ENCODE measurements at regions of chr4 and their contacts with region 1.

Region 1: DNA sequence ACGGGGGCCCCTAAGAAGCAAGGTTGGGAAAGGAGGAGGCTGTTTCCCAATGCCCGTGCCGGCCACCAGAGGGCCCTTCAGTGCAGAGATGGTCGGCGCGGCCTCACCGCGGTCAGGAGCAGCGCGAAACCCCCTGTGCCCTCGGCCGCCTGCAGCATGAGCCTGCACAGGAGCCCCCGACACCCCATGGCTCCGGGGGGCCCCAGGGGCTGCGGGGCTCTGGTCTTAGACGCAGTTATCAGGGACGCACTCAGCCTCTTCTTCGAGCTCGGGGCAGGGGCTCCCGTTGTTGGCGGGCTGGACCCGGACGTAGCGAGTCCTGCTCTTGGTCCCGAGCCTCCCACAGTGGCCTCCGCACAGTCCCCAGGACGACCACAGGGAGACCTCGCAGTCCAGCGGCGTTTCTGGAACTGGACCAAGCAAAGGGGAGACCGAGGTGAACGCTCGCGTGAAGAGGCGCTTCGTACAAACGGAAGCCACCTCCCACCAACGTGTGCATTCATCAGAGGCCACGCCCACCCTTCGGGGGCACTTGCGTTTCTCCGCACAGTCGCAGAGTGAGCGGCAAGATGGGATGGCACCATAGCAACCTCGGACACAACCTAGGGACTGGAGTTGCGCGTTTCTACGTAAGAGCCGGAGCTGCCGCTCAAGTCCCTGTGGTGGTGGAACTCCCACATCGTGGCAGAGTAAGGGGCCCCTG is 5.0 kb downstream of the SPON2 start:
- DNase-seq: peak; percentile 79
- ATAC-seq: peak; percentile 88
- H3K4me3 Mint-ChIP-seq: peak overlapping the region; percentile 86
- H3K27ac Mint-ChIP-seq: peak overlapping the region; percentile 80
- H3K4me1 Mint-ChIP-seq: peaks cover 57% of the 10 kb centered on the region
- H3K27me3 Mint-ChIP-seq: peaks cover 2% of the 10 kb centered on the region
- CTCF ChIP-seq: peak; percentile 69

Region 2: DNA sequence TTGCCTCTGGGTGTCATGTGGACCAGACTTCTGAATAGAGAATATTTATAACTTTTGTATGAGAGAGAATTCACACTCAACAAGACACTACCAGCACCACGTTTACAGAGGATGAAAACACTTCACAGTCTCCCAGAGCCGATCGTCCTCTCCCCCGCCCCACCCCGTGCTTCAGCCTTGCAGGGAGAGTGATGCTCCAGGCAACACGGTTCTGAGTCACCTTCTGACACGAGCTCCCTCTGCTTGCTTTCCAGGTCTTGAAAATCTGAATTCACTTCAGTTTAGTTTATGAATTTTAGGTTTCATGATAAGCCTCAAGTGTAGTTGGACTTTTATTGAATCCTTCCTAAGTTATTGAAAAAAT is 401.3 kb before region 1 on chr4:
- CTCF ChIA-PET with region 1: no interaction called
- POLR2A ChIA-PET with region 1: no interaction called
- intact Hi-C with region 1: no loop called
- DNase-seq: no peak
- ATAC-seq: no peak
- H3K4me3 Mint-ChIP-seq: no peak overlapping the region
- H3K27ac Mint-ChIP-seq: peak overlapping the region; percentile 7
- H3K4me1 Mint-ChIP-seq: peaks cover 6% of the 10 kb centered on the region
- H3K27me3 Mint-ChIP-seq: no peaks in the 10 kb centered on the region
- CTCF ChIP-seq: no peak

Region 3: GRCh38 chr4:1039493-1040343 is 127.7 kb before region 1 on chr4:
- CTCF ChIA-PET with region 1: no interaction called
- POLR2A ChIA-PET with region 1: no interaction called
- intact Hi-C with region 1: no loop called
- DNase-seq: no peak
- ATAC-seq: no peak
- H3K4me3 Mint-ChIP-seq: no peak overlapping the region
- H3K27ac Mint-ChIP-seq: no peak overlapping the region
- H3K4me1 Mint-ChIP-seq: no peaks in the 10 kb centered on the region
- H3K27me3 Mint-ChIP-seq: peaks cover 4% of the 10 kb centered on the region
- CTCF ChIP-seq: no peak

Region 4: GRCh38 chr4:1113311-1114009 is 53.9 kb before region 1 on chr4 and contains the start of gene RNF212:
- CTCF ChIA-PET with region 1: no interaction called
- POLR2A ChIA-PET with region 1: no interaction called
- intact Hi-C with region 1: no loop called
- DNase-seq: peak; percentile 36
- ATAC-seq: peak; percentile 40
- H3K4me3 Mint-ChIP-seq: peak within 1 kb of the TSS; percentile 69
- H3K27ac Mint-ChIP-seq: no peak within 1 kb of the TSS
- H3K4me1 Mint-ChIP-seq: no peaks in the 10 kb centered on the region
- H3K27me3 Mint-ChIP-seq: peaks cover 32% of the 10 kb centered on the region
- CTCF ChIP-seq: no peak
- total RNA-seq, gene RNF212: 2.1 and 2.4 TPM in 2 replicates

Region 5: DNA sequence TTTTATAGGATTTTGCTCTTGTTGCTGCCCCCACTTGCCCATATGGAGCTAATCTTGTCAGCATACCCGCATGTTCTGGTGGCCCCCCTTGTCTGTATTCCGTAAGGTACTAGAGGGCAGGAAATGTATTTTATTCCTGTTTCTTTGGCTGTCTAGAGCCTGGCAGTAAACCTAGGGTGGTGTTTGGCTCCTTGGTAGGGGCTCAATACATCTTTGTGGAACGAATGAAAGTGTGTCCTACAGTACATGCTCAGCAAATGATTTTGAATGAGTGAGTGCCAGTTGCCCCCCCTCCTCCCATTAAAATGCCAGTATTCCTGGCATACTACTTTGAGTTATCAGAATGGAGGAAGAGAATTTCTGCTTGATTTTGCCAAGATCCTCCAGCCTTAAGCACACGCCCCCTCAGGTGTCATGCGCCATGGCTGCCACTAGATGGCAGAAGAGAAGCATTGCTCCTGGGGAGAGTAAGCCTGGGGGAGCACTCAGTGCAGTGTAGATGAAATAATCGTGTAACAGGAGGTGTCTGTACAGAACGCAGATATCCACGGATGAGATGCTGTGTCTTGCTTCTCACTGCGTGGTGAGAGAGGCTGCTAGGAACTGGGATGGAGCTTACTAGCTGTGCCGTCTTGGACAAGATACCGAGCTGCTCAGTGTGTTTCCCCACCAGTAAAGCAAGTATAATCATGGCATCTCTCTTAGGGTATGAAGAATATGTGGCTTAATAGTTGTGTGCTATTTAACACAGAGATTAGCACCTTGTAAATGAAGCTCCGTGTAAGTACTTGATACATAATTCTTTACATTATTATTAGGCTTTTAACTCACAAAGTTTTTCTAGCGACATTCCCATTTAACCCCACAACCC is 36.8 kb before region 1 on chr4:
- CTCF ChIA-PET with region 1: interaction called, 3 read pairs
- POLR2A ChIA-PET with region 1: no interaction called
- intact Hi-C with region 1: loop called (anchors 1 kb)
- DNase-seq: peak; percentile 63
- ATAC-seq: peak; percentile 99
- H3K4me3 Mint-ChIP-seq: no peak overlapping the region
- H3K27ac Mint-ChIP-seq: peak overlapping the region; percentile 19
- H3K4me1 Mint-ChIP-seq: peaks cover 21% of the 10 kb centered on the region
- H3K27me3 Mint-ChIP-seq: peaks cover 2% of the 10 kb centered on the region
- CTCF ChIP-seq: peak; percentile 99

Region 6: GRCh38 chr4:1200425-1201035 is 33.1 kb after region 1 on chr4:
- CTCF ChIA-PET with region 1: interaction called, 3 read pairs
- POLR2A ChIA-PET with region 1: interaction called, 4 read pairs
- intact Hi-C with region 1: loop called (anchors 1 kb)
- DNase-seq: no peak
- ATAC-seq: peak; percentile 5
- H3K4me3 Mint-ChIP-seq: no peak overlapping the region
- H3K27ac Mint-ChIP-seq: no peak overlapping the region
- H3K4me1 Mint-ChIP-seq: peaks cover 42% of the 10 kb centered on the region
- H3K27me3 Mint-ChIP-seq: no peaks in the 10 kb centered on the region
- CTCF ChIP-seq: no peak

Region 7: DNA sequence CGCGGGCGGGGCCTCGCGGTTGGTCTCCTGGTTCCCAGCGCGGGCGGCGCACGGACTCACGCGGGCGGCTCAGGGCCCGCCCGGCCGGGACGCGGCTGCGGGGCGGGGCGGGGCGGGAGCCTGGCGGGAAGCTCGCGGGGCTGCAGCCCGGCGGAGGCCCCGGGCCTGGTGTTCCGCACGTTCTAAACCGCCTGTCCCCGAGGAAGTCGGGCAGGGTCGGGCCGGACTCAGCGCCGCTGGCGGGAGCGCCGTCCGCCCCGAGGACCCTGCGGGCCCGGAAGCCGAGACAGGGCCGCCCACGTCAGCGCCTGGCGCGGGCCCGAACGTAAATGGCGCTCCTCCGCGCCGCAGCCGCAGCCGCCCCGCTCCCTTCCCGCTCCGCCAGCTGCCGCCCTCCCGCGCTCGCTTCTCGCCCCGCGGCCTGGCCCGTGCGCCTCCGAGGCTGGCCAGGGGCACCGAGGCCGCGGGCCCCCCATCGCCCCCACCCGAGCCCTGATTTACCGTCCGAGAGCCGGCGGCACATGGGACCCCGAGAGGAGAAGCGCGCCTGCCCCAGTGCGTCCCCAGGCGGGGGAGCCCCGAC is 81.8 kb after region 1 on chr4:
- CTCF ChIA-PET with region 1: interaction called, 4 read pairs
- POLR2A ChIA-PET with region 1: interaction called, 9 read pairs
- intact Hi-C with region 1: loop called (anchors 1 kb)
- DNase-seq: peak; percentile 87
- ATAC-seq: peak; percentile 70
- H3K4me3 Mint-ChIP-seq: peak overlapping the region; percentile 88
- H3K27ac Mint-ChIP-seq: peak overlapping the region; percentile 93
- H3K4me1 Mint-ChIP-seq: peaks cover 59% of the 10 kb centered on the region
- H3K27me3 Mint-ChIP-seq: no peaks in the 10 kb centered on the region
- CTCF ChIP-seq: no peak

Region 8: GRCh38 chr4:1289207-1290164 is 122.1 kb after region 1 on chr4 and contains the start of gene MAEA:
- CTCF ChIA-PET with region 1: interaction called, 3 read pairs
- POLR2A ChIA-PET with region 1: interaction called, 3 read pairs
- intact Hi-C with region 1: loop called (anchors 1 kb)
- DNase-seq: peak; percentile 95
- ATAC-seq: peak; percentile 96
- H3K4me3 Mint-ChIP-seq: peak within 1 kb of the TSS; percentile 90
- H3K27ac Mint-ChIP-seq: peak within 1 kb of the TSS; percentile 81
- H3K4me1 Mint-ChIP-seq: peaks cover 44% of the 10 kb centered on the region
- H3K27me3 Mint-ChIP-seq: no peaks in the 10 kb centered on the region
- CTCF ChIP-seq: no peak
- total RNA-seq, gene MAEA: 67.3 and 73.7 TPM in 2 replicates

Region 9: GRCh38 chr4:1360423-1361283 is 193.3 kb after region 1 on chr4:
- CTCF ChIA-PET with region 1: no interaction called
- POLR2A ChIA-PET with region 1: no interaction called
- intact Hi-C with region 1: no loop called
- DNase-seq: no peak
- ATAC-seq: no peak
- H3K4me3 Mint-ChIP-seq: no peak overlapping the region
- H3K27ac Mint-ChIP-seq: no peak overlapping the region
- H3K4me1 Mint-ChIP-seq: peaks cover 1% of the 10 kb centered on the region
- H3K27me3 Mint-ChIP-seq: no peaks in the 10 kb centered on the region
- CTCF ChIP-seq: no peak